BJ (cell line): ENCODE measurements at regions of chr4 and their contacts with region 1.

Region 1: GRCh38 chr4:153204247-153205027 is at the start of gene TRIM2:
- DNase-seq: no peak
- H3K4me3 ChIP-seq: no peak within 1 kb of the TSS
- H3K27me3 ChIP-seq: no peaks in the 10 kb centered on the region
- CTCF ChIP-seq: no peak
- polyA plus RNA-seq, gene TRIM2: 24.5 and 34.1 TPM in 2 replicates

Region 2: DNA sequence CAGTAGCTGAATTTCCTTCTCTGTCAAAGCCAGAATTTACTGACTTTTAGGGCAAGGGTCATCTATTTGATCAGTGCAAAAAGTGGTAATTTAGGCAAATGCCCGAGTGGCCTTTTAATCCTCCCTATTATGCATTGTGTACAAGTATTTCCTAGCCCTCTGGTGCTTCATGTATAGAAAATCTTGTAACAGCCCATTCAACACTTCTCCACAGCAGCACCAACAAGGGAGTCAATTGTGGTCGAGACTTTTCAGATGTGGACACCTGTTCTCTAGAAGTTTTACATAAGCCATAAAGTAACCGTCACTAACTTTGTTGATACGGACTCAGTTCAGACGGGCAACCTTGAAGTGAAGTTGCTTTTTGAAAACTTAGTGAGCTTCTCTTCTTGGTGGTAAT is 319.3 kb before region 1 on chr4:
- CTCF ChIA-PET with region 1: no interaction called
- POLR2A ChIA-PET with region 1: no interaction called
- DNase-seq: no peak
- H3K4me3 ChIP-seq: no peak overlapping the region
- H3K27me3 ChIP-seq: no peaks in the 10 kb centered on the region
- CTCF ChIP-seq: no peak

Region 3: GRCh38 chr4:153191795-153192363 is 12.6 kb before region 1 on chr4:
- CTCF ChIA-PET with region 1: interaction called, 13 read pairs
- POLR2A ChIA-PET with region 1: no interaction called
- DNase-seq: no peak
- H3K4me3 ChIP-seq: no peak overlapping the region
- H3K27me3 ChIP-seq: no peaks in the 10 kb centered on the region
- CTCF ChIP-seq: no peak

Region 4: DNA sequence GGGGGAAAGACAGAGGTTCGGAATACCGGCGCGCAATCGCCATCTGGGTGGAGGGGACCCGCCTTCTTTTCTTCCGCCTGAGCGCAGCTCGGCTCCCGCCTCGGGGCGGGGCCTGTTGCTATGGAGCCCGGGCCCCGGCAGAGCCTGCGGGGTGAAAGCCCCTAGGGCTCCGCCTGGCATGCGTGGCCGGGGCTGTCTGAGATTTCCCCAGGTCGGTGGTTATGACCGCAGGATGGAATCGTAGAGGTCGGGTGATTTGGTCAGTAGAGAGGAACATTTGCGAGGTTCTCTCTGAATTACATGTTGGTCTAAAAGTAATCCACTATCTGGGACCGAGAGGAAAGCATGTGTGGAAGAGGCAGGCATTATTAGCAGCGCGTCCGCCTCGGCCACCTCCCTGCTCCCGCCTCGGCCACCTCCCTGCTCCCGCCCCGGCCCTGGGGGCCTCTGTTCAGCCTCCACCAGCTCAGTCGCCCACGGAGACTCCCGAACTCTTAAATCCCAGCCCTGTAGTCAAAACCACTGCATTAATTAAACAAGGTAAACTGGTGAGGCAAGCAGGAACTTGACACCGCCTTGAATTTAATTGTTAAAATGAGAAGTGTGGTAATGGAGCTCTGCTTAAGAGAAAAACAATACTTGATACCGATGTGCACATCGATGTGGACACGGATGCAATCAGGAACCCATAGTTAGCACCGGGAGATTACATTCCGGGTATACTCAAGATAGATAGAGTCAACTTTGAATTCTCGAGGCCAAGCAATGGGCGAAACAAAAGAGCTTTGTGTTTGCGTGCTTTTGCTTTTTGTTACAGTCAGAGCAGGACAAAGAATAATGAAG is 45.0 kb after region 1 on chr4:
- CTCF ChIA-PET with region 1: no interaction called
- POLR2A ChIA-PET with region 1: no interaction called
- DNase-seq: no peak
- H3K4me3 ChIP-seq: peak overlapping the region; percentile 48
- H3K27me3 ChIP-seq: no peaks in the 10 kb centered on the region
- CTCF ChIP-seq: no peak